MCF 10A (cell line): ENCODE measurements at regions of chr9 and their contacts with region 1.

Region 1: GRCh38 chr9:112074250-112075008 is 100.7 kb downstream of the SUSD1 start:
- DNase-seq: peak; percentile 87
- H3K4me3 Mint-ChIP-seq: no peak overlapping the region
- H3K27ac Mint-ChIP-seq: peak overlapping the region; percentile 83
- H3K4me1 Mint-ChIP-seq: peaks cover 15% of the 10 kb centered on the region
- H3K27me3 Mint-ChIP-seq: no peaks in the 10 kb centered on the region
- CTCF ChIP-seq: peak; percentile 90

Region 2: GRCh38 chr9:111766066-111766465 is 308.4 kb before region 1 on chr9:
- CTCF ChIA-PET with region 1: interaction called, 177 read pairs
- POLR2A ChIA-PET with region 1: interaction called, 4 read pairs
- intact Hi-C with region 1: no loop called
- DNase-seq: no peak
- H3K4me3 Mint-ChIP-seq: no peak overlapping the region
- H3K27ac Mint-ChIP-seq: no peak overlapping the region
- H3K4me1 Mint-ChIP-seq: no peaks in the 10 kb centered on the region
- H3K27me3 Mint-ChIP-seq: no peaks in the 10 kb centered on the region
- CTCF ChIP-seq: no peak

Region 3: DNA sequence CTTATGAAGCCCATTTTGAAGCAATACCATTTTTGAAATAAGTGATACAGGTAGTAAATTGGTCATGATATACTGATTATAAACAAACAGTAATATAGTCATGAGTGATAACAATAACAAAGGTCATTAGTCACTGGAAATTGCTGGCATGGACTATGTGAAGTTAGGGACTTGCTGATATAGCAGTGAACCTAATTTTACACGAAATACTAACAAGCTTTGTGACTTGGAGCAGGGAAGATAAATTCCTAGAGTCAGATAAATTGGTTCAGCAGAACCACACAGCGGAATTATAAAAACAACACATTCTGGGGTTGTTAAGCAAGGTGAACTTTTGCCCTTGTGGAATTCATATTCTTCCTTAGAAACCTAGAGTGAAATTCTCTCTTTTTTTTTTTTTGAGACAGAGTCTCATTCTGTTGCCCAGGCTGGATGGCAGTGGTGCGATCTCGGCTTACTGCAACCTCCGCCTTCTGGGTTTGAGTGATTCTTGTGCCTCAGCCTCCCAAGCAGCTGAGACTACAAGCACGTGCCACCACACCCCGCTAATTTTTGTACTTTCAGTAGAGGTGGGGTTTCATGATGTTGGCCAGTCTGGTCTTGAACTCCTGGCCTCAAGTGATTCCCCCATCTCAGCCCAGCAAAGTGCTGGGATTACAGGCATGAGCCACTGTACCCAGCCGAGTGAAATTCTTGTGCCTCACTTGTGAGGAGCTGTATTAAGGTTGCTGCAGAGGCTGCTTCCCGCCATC is 171.9 kb before region 1 on chr9:
- CTCF ChIA-PET with region 1: interaction called, 14 read pairs
- POLR2A ChIA-PET with region 1: interaction called, 21 read pairs
- intact Hi-C with region 1: loop called (anchors 1 kb)
- DNase-seq: no peak
- H3K4me3 Mint-ChIP-seq: no peak overlapping the region
- H3K27ac Mint-ChIP-seq: no peak overlapping the region
- H3K4me1 Mint-ChIP-seq: peaks cover 32% of the 10 kb centered on the region
- H3K27me3 Mint-ChIP-seq: no peaks in the 10 kb centered on the region
- CTCF ChIP-seq: no peak

Region 4: DNA sequence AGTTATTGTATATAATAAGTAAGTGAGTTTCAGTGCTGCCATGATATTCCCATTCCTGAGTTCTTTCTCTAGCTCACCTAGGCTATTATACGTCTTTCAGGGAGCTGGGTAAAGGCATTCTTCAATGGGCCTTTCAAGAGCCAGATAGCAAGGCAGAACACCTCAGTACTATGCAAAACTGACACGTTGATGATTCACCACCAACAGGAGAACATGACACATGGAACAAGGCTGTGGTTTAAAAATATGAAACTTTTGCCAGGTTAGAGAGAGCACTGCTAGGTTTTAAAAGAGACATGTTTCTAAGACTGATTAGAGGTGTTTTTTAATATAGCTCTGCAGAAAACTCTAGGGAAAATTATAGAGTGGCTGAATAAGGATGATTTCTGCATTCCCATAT is 81.9 kb before region 1 on chr9:
- CTCF ChIA-PET with region 1: interaction called, 10 read pairs
- POLR2A ChIA-PET with region 1: no interaction called
- intact Hi-C with region 1: no loop called
- DNase-seq: peak; percentile 78
- H3K4me3 Mint-ChIP-seq: no peak overlapping the region
- H3K27ac Mint-ChIP-seq: peak overlapping the region; percentile 73
- H3K4me1 Mint-ChIP-seq: peaks cover 17% of the 10 kb centered on the region
- H3K27me3 Mint-ChIP-seq: no peaks in the 10 kb centered on the region
- CTCF ChIP-seq: no peak

Region 5: GRCh38 chr9:112061152-112061740 is 13.2 kb before region 1 on chr9:
- CTCF ChIA-PET with region 1: interaction called, 19 read pairs
- POLR2A ChIA-PET with region 1: no interaction called
- intact Hi-C with region 1: no loop called
- DNase-seq: peak; percentile 92
- H3K4me3 Mint-ChIP-seq: no peak overlapping the region
- H3K27ac Mint-ChIP-seq: peak overlapping the region; percentile 53
- H3K4me1 Mint-ChIP-seq: peaks cover 43% of the 10 kb centered on the region
- H3K27me3 Mint-ChIP-seq: no peaks in the 10 kb centered on the region
- CTCF ChIP-seq: no peak